ENCODE measurements at regions of chr12 and their contacts with region 1.

Region 1: GRCh38 chr12:106357549-106358395 is at the start of gene POLR3B:
- DNase-seq: peak; percentile 97
- H3K4me3 ChIP-seq: peak within 1 kb of the TSS; percentile 52 to 92 (median 87)
- H3K27ac ChIP-seq: peak within 1 kb of the TSS; percentile 64
- H3K4me1 ChIP-seq: peaks cover 12% of the 10 kb centered on the region
- H3K27me3 ChIP-seq: peaks cover 0 to 4% of the 10 kb centered on the region in 2 experiments
- CTCF ChIP-seq: peak; percentile 86 to 89
- POLR2A ChIP-seq: peak; percentile 90
- total RNA-seq, gene POLR3B: 10.1 and 12.3 TPM in 2 replicates

Region 2: DNA sequence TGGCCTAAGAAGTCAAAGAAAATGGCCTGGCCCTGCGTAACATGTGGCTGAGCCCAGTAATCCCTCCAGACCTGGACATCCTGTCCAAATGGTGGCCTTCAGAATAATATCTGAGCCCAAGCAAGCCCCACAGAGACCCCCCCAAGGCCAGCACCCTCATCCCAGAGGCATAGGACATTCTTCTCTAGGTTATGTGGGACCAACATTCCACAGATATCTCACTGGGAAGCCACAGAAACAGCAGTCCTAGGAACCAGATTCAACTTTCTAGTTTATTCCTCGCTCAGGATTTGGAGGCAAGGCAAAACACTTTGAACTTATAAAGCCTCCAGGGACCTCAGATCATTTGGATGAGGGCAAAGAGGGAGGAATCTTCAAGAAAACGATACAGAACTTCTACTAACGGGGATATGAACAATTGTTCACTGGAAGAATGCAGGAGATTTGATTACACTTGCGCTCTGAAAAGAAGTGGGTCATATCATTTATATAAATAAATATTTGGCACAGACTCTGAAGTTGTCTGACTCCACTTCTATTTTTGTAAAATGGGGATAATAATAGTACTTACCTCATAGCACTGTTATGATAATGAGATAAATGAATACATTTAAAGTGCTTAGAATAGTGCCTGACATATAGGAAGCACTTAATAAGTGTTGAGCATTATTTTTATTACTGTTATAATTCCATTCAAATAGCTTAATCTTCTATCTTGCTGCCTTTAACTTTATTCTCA is 390.6 kb before region 1 on chr12:
- CTCF ChIA-PET with region 1: no interaction called
- POLR2A ChIA-PET with region 1: no interaction called
- dilution Hi-C with region 1: no loop called
- intact Hi-C with region 1: no loop called
- DNase-seq: peak; percentile 18
- H3K4me3 ChIP-seq: no peak overlapping the region
- H3K27ac ChIP-seq: peak overlapping the region; percentile 18
- H3K4me1 ChIP-seq: peaks cover 4% of the 10 kb centered on the region
- H3K27me3 ChIP-seq: no peaks in the 10 kb centered on the region
- CTCF ChIP-seq: no peak
- POLR2A ChIP-seq: no peak

Region 3: DNA sequence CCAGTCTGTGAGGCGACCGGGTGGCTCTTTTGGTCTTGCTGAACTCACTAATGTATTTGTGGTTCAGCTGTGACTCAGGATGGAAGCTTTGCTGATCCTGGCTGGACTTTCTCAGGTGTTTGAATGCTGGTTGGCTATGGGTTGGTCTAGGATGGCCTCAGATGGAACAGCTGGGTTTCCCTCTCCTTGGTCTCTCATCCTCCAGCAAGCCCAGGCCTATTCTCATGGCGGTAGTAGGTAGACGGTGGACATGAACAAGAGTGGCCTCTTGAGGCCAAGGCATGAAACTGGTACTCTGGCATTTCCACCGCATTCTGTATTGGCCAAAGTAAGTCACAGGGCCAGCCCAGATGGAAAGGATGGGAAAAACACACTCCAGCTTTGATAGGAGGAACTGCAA is 12.0 kb before region 1 on chr12:
- CTCF ChIA-PET with region 1: interaction called, 17 read pairs
- POLR2A ChIA-PET with region 1: no interaction called
- dilution Hi-C with region 1: no loop called
- intact Hi-C with region 1: no loop called
- DNase-seq: peak; percentile 67
- H3K4me3 ChIP-seq: no peak overlapping the region
- H3K27ac ChIP-seq: no peak overlapping the region
- H3K4me1 ChIP-seq: no peaks in the 10 kb centered on the region
- H3K27me3 ChIP-seq: peaks cover 3 to 5% of the 10 kb centered on the region in 2 experiments
- CTCF ChIP-seq: peak; percentile 33 to 54
- POLR2A ChIP-seq: no peak

Region 4: DNA sequence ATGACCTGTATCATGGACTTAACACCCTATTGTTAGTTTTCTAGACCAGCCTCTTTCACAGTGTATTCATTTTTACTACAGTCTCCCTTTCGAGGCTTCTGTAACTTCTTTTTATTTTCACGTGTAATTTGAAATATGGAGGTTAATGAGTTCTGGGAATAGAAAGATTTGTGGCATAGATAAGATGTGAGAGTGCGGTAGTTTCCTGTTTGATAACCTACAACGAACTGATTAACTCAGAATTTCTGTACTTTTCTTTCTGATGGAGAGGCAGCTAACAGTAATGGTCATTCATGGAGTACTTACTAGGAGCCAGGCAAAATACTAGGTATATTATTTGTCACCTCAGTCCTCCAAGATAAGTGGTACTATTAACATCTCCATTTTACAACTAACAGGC is 21.0 kb after region 1 on chr12:
- CTCF ChIA-PET with region 1: interaction called, 21 read pairs
- POLR2A ChIA-PET with region 1: no interaction called
- dilution Hi-C with region 1: no loop called
- intact Hi-C with region 1: no loop called
- DNase-seq: no peak
- H3K4me3 ChIP-seq: no peak overlapping the region
- H3K27ac ChIP-seq: no peak overlapping the region
- H3K4me1 ChIP-seq: no peaks in the 10 kb centered on the region
- H3K27me3 ChIP-seq: no peaks in the 10 kb centered on the region
- CTCF ChIP-seq: no peak
- POLR2A ChIP-seq: no peak

Region 5: GRCh38 chr12:106774005-106774807 is 416.4 kb after region 1 on chr12 and contains the start of gene RIC8B:
- CTCF ChIA-PET with region 1: no interaction called
- POLR2A ChIA-PET with region 1: no interaction called
- dilution Hi-C with region 1: no loop called
- intact Hi-C with region 1: loop called (anchors 5 kb)
- DNase-seq: peak; percentile 99
- H3K4me3 ChIP-seq: peak within 1 kb of the TSS; percentile 52 to 84 (median 74)
- H3K27ac ChIP-seq: peak within 1 kb of the TSS; percentile 91
- H3K4me1 ChIP-seq: peaks cover 12% of the 10 kb centered on the region
- H3K27me3 ChIP-seq: no peaks in the 10 kb centered on the region
- CTCF ChIP-seq: peak in 1 of 2 donors; percentile 2
- POLR2A ChIP-seq: peak; percentile 91
- total RNA-seq, gene RIC8B: 13.7 and 16.5 TPM in 2 replicates

Region 6: DNA sequence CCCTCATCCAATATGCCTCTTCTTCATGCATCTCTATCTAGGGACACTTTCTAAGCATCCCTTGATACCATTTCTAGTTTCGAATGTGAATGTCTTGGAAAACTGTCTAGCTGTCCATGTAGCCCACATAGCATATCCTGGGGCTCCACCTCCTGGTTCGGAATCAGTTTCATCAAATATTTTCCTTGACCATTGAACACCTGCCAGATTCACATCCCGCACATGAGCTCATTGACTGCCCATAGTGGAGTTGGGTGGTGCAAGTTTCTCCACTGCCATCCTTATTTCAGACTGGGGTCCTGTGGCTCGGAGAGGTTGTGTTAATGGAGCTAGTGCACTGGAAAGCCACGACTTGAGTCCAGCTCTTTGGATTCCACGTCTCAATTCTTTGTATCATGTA is 539.3 kb after region 1 on chr12:
- CTCF ChIA-PET with region 1: interaction called, 11 read pairs
- POLR2A ChIA-PET with region 1: no interaction called
- dilution Hi-C with region 1: no loop called
- intact Hi-C with region 1: no loop called
- DNase-seq: peak; percentile 13
- H3K4me3 ChIP-seq: no peak overlapping the region
- H3K27ac ChIP-seq: no peak overlapping the region
- H3K4me1 ChIP-seq: no peaks in the 10 kb centered on the region
- H3K27me3 ChIP-seq: peaks cover 5 to 8% of the 10 kb centered on the region in 2 experiments
- CTCF ChIP-seq: no peak
- POLR2A ChIP-seq: no peak

Region 7: GRCh38 chr12:107179871-107180270 is 822.1 kb after region 1 on chr12:
- CTCF ChIA-PET with region 1: no interaction called
- POLR2A ChIA-PET with region 1: no interaction called
- dilution Hi-C with region 1: no loop called
- intact Hi-C with region 1: no loop called
- DNase-seq: no peak
- H3K4me3 ChIP-seq: no peak overlapping the region
- H3K27ac ChIP-seq: no peak overlapping the region
- H3K4me1 ChIP-seq: no peaks in the 10 kb centered on the region
- H3K27me3 ChIP-seq: no peaks in the 10 kb centered on the region
- CTCF ChIP-seq: no peak
- POLR2A ChIP-seq: no peak

Region 8: DNA sequence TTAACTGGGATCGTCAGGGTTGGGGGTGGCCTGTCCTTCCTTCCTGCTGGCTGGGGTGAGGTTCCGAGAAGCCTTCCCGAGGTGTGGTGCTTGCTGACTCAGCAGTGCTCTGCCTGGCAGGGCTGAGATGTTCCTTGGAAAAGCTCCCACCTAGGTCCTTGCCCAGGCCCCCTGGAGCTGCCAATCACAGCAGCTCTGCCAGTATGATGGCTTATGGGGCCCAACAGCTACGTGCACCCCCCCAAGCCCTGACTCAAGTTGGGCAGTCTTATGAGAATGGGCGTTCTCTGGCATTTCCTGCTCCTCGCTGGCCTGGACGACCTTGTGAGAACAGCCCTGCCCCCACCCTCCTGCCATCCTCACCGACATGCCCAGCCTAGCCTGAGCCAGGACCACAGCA is 1027.7 kb after region 1 on chr12:
- CTCF ChIA-PET with region 1: no interaction called
- POLR2A ChIA-PET with region 1: no interaction called
- dilution Hi-C with region 1: no loop called
- intact Hi-C with region 1: no loop called
- DNase-seq: no peak
- H3K4me3 ChIP-seq: no peak overlapping the region
- H3K27ac ChIP-seq: no peak overlapping the region
- H3K4me1 ChIP-seq: no peaks in the 10 kb centered on the region
- H3K27me3 ChIP-seq: no peaks in the 10 kb centered on the region
- CTCF ChIP-seq: no peak
- POLR2A ChIP-seq: no peak

Measured in endothelial cell of umbilical vein (primary cell).